K562 (cell line): ENCODE measurements at regions of chr7 and their contacts with region 1.

Region 1: DNA sequence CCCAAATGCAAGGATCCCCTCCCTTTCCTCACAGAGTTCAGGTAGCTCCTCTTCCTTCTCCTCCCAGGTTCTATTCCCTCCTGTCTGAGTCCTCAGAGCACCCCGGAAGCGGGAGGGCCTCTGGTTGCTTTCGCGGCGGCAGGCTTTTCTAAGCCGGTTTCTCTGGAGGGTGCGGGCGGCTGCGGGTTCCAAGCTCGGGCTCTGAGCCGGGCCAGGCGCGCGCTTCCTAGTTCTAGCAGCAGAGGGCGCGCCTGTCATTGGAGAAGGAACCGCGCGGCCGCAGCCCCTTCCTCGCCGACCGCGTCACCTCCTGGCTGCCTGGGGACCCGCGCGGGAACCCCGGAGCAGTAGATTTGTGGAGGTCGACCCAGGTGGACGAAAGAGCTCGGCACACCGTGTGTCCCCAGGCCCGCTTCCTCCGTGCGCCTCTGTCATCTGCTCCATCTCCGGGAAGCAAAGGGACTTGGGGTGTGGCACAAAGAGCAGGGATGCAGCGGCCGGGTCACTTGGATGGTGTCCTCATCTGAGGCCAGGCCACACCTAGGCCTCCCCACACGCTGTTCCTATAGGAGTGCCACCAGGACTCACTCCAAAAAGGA is 389.0 kb upstream of the PODXL start:
- DNase-seq: peak; percentile 68 to 89 (median 82)
- ATAC-seq: peak; percentile 99
- H3K4me3 ChIP-seq: no peak overlapping the region
- H3K27ac ChIP-seq: no peak overlapping the region
- H3K4me1 ChIP-seq: peaks cover 0 to 7% of the 10 kb centered on the region in 2 experiments; a peak in 1 of 5 replicates
- H3K27me3 ChIP-seq: peaks cover 5 to 43% of the 10 kb centered on the region in 2 experiments; a peak in 4 of 5 replicates
- CTCF ChIP-seq: peak; percentile 89 to 96 (median 90)
- EP300 ChIP-seq: no peak
- POLR2A ChIP-seq: no peak
- RAD21 ChIP-seq: peak; percentile 86 to 89

Region 2: DNA sequence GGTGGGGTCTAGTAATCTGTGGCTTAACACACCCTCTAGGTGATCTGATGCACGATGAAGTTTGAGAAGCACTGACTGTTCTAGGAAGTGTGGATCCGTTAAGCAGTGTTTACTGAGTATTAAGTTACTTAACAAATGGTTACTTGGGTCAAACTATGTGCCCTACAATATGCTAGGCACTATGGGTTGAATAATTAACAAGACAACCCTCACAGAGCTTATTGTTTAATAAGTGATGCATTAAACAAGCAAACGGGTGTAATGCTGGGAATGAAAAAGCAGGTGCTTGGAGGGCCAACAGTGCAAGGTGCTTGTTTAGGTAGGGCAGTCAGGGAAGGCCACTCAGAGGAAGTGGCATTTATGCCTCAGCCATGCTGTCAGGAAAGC is 11.0 kb before region 1 on chr7:
- CTCF ChIA-PET with region 1: no interaction called
- POLR2A ChIA-PET with region 1: no interaction called
- in situ Hi-C with region 1: no loop called
- intact Hi-C with region 1: no loop called
- DNase-seq: no peak
- ATAC-seq: no peak
- H3K4me3 ChIP-seq: no peak overlapping the region
- H3K27ac ChIP-seq: no peak overlapping the region
- H3K4me1 ChIP-seq: no peaks in the 10 kb centered on the region
- H3K27me3 ChIP-seq: no peaks in the 10 kb centered on the region; a peak in 1 of 5 replicates
- CTCF ChIP-seq: no peak
- EP300 ChIP-seq: no peak
- POLR2A ChIP-seq: no peak
- RAD21 ChIP-seq: no peak

Region 3: DNA sequence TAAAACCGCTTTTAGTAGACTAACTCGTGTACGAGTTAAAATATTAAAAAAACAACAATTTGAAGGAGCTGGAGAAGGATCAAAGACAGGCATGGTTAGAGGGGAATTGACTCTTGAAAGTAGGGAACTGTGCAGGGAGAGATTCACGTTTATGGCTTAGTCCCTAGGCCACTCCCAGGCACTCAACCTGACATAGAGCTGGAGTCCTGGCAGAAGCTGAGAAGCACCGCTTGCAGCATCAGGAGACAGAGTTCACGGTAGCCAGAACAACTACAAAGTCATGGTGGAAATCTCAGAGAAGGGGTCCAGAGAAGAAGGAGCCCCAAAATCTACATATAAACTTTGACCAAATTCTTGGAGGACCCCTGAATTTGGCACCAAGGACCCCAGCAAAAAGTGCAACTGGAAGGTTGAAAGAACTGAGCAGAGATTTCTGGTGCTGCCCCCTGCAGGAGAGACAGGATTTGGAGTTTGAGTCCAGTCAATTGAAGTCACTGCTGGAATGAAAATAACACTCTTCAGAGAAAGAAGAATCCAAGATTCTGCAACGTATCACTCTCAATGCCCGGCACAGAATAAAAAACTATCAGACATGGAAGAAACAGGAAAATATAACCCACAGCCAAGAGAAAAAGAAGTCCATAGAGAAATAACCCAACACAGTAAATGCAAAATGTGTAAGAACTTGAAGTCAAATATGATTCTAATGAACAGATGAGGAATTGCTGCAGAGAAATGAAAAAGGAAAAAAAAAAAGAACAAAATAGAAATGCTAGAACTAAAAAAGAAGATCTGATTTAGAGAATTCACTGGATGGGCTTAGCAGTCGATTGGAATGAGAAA is 104.3 kb after region 1 on chr7:
- CTCF ChIA-PET with region 1: interaction called, 13 read pairs
- POLR2A ChIA-PET with region 1: no interaction called
- in situ Hi-C with region 1: no loop called
- intact Hi-C with region 1: loop called (anchors 5 kb)
- DNase-seq: peak; percentile 50 to 65 (median 60)
- ATAC-seq: peak; percentile 75
- H3K4me3 ChIP-seq: no peak overlapping the region
- H3K27ac ChIP-seq: no peak overlapping the region
- H3K4me1 ChIP-seq: no peaks in the 10 kb centered on the region
- H3K27me3 ChIP-seq: no peaks in the 10 kb centered on the region
- CTCF ChIP-seq: peak; percentile 66 to 86 (median 80)
- EP300 ChIP-seq: no peak
- POLR2A ChIP-seq: no peak
- RAD21 ChIP-seq: peak; percentile 20 to 41; a peak in 2 of 4 replicates

Region 4: DNA sequence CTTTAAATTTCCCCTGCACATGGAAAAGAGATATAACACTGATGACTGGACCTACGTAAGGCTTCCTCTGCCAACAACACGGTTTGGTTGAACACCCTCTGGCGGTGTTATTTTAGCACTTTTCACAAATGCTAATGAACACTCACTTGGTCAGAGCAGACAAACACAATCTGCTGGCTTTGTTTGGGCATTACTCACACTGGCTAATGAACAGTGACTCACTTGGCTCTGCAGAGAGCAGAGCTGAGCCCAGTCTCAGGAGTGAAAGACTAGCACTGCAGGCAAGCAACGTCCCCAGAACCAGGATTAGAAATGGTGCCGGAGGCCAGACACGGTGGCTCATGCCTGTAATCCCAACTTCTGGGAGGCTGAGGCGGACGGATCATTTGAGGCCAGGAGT is 200.1 kb after region 1 on chr7:
- CTCF ChIA-PET with region 1: no interaction called
- POLR2A ChIA-PET with region 1: no interaction called
- in situ Hi-C with region 1: no loop called
- intact Hi-C with region 1: loop called (anchors 10 kb)
- DNase-seq: no peak
- ATAC-seq: no peak; the same call in 2 of the 3 replicates
- H3K4me3 ChIP-seq: no peak overlapping the region
- H3K27ac ChIP-seq: no peak overlapping the region
- H3K4me1 ChIP-seq: no peaks in the 10 kb centered on the region
- H3K27me3 ChIP-seq: peaks cover 16 to 65% of the 10 kb centered on the region in 2 experiments; a peak in 3 of 5 replicates
- CTCF ChIP-seq: no peak; a peak in 1 of 6 replicates
- EP300 ChIP-seq: no peak
- POLR2A ChIP-seq: no peak
- RAD21 ChIP-seq: no peak

Region 5: GRCh38 chr7:132250883-132251653 is 305.7 kb after region 1 on chr7:
- CTCF ChIA-PET with region 1: interaction called, 4 read pairs
- POLR2A ChIA-PET with region 1: no interaction called
- in situ Hi-C with region 1: no loop called
- intact Hi-C with region 1: loop called (anchors 2 kb)
- DNase-seq: no peak
- ATAC-seq: no peak
- H3K4me3 ChIP-seq: no peak overlapping the region
- H3K27ac ChIP-seq: no peak overlapping the region
- H3K4me1 ChIP-seq: no peaks in the 10 kb centered on the region
- H3K27me3 ChIP-seq: peaks cover 2 to 6% of the 10 kb centered on the region in 2 experiments; a peak in 2 of 5 replicates
- CTCF ChIP-seq: no peak
- EP300 ChIP-seq: no peak
- POLR2A ChIP-seq: no peak
- RAD21 ChIP-seq: no peak

Region 6: DNA sequence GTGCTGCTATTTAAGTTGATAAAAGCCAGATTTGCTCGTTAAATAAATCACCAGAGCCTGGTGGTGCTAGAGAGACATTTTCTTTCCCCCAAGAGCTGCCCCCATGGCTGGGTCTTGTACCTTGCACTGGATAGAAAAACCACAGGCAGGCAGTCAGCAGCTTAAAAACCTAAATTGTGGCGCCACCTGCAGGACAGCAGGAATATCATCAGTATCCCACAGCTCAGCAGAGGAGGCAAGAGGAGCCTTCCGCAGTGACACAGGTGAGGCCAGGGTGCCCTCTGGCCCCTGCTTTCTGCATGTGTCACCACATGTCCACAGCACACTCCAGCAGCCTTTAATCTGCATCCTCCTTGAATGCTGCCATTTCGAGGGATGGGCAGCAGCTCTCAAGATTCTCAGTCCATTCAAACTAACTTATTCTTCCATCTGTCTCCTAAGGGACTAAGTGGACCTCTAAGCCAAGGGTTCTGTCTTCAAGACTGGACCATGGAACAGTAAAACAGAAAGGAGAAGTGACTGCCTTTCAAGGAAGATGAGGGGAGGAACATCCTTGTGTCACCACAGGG is 635.4 kb after region 1 on chr7:
- CTCF ChIA-PET with region 1: interaction called, 4 read pairs
- POLR2A ChIA-PET with region 1: no interaction called
- in situ Hi-C with region 1: no loop called
- intact Hi-C with region 1: loop called (anchors 5 kb)
- DNase-seq: peak; percentile 77 to 88 (median 80)
- ATAC-seq: peak; percentile 98
- H3K4me3 ChIP-seq: no peak overlapping the region
- H3K27ac ChIP-seq: no peak overlapping the region
- H3K4me1 ChIP-seq: peaks cover 0 to 8% of the 10 kb centered on the region in 2 experiments; a peak in 1 of 5 replicates
- H3K27me3 ChIP-seq: peaks cover 26 to 28% of the 10 kb centered on the region in 2 experiments; a peak in 4 of 5 replicates
- CTCF ChIP-seq: peak; percentile 91 to 94 (median 93)
- EP300 ChIP-seq: no peak
- POLR2A ChIP-seq: no peak
- RAD21 ChIP-seq: peak; percentile 88 to 90